ENCODE measurements at regions of chr2 and their contacts with region 1.

Region 1: GRCh38 chr2:203280428-203281064 is 41.7 kb downstream of the CYP20A1 start:
- DNase-seq: no peak
- ATAC-seq: peak; percentile 35
- H3K4me3 ChIP-seq: no peak overlapping the region
- H3K27ac ChIP-seq: no peak overlapping the region
- H3K4me1 ChIP-seq: no peaks in the 10 kb centered on the region
- H3K27me3 ChIP-seq: no peaks in the 10 kb centered on the region
- CTCF ChIP-seq: no peak
- POLR2A ChIP-seq: no peak
- RAD21 ChIP-seq: no peak

Region 2: DNA sequence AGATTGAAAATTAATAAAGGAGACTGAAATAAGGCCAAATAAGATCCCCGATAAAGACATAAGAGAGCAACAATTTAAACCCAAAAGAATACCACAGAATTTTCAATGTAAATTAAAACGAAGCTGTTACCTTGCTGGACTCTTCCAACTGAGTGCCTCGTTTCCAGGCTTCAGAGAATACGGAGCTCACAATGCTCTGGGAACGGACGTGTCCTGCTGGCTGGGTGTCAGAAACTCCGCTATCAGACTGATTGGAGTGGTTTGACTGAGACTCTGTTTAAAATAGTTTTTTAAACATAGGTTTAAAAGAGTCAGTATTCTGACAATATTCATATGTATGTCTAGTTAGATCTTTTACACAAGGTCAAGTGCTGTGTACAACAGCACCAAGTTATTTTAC is 164.2 kb after region 1 on chr2:
- CTCF ChIA-PET with region 1: no interaction called
- POLR2A ChIA-PET with region 1: interaction called, 15 read pairs
- dilution Hi-C with region 1: no loop called
- in situ Hi-C with region 1: no loop called
- intact Hi-C with region 1: no loop called
- DNase-seq: no peak
- ATAC-seq: no peak
- H3K4me3 ChIP-seq: no peak overlapping the region
- H3K27ac ChIP-seq: no peak overlapping the region
- H3K4me1 ChIP-seq: peaks cover 5% of the 10 kb centered on the region
- H3K27me3 ChIP-seq: no peaks in the 10 kb centered on the region
- CTCF ChIP-seq: no peak
- POLR2A ChIP-seq: no peak
- RAD21 ChIP-seq: no peak